ENCODE measurements at regions of chr13 and their contacts with region 1.

Region 1: GRCh38 chr13:104750377-104750776 is 1684.2 kb upstream of the SLC10A2 start:
- DNase-seq: peak; percentile 18
- ATAC-seq: no peak
- H3K4me3 ChIP-seq: no peak overlapping the region
- H3K27ac ChIP-seq: no peak overlapping the region
- H3K4me1 ChIP-seq: no peaks in the 10 kb centered on the region
- H3K27me3 ChIP-seq: no peaks in the 10 kb centered on the region
- CTCF ChIP-seq: no peak

Region 2: DNA sequence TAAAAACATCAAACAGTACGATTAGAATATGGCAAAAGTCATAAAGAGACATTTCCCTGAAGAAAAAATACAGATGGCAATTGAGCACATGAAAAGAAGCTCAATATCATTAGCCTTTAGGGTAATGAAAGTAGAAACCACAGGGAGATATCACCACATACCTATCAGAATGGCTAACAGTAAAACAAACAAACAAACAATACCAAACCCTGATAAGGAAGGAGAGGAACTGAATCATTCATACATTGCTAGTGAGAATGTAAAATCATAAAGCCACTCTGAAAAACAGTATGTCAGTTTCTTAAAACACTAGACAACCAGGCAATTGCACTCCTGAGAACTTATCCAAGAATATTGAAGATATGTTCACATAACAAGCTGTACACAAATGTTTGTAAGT is 341.6 kb before region 1 on chr13:
- CTCF ChIA-PET with region 1: no interaction called
- POLR2A ChIA-PET with region 1: no interaction called
- intact Hi-C with region 1: loop called (anchors 10 kb)
- DNase-seq: peak; percentile 45
- ATAC-seq: peak; percentile 52
- H3K4me3 ChIP-seq: no peak overlapping the region
- H3K27ac ChIP-seq: no peak overlapping the region
- H3K4me1 ChIP-seq: peaks cover 33% of the 10 kb centered on the region
- H3K27me3 ChIP-seq: no peaks in the 10 kb centered on the region
- CTCF ChIP-seq: no peak

Region 3: DNA sequence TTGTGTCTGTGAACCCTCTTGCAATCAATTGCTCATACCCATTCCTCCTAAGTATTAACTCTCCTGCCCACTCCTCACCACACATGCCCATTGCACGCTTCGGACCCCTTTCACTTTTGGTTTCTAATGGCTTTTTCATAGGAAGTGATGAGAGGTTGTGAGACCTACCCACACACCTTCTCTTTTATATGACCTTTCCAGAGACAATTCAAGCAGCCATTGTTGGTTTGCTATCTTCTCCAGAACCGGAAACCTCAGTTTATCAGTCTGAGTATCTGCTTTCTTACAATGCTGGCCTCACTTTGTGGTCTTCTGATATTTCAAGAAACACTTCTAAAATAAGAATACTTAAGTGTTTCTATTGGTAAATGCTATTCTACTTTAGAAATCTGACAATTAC is 133.4 kb before region 1 on chr13:
- CTCF ChIA-PET with region 1: no interaction called
- POLR2A ChIA-PET with region 1: interaction called, 30 read pairs
- intact Hi-C with region 1: no loop called
- DNase-seq: no peak
- ATAC-seq: no peak
- H3K4me3 ChIP-seq: no peak overlapping the region
- H3K27ac ChIP-seq: no peak overlapping the region
- H3K4me1 ChIP-seq: no peaks in the 10 kb centered on the region
- H3K27me3 ChIP-seq: no peaks in the 10 kb centered on the region
- CTCF ChIP-seq: no peak

Measured in PC-3 (cell line).